Activated CD4-positive, alpha-beta T cell treated with anti-CD3 and anti-CD28 coated beads for 36 hours (primary cell): ENCODE measurements at regions of chr5 and their contacts with region 1.

Region 1: DNA sequence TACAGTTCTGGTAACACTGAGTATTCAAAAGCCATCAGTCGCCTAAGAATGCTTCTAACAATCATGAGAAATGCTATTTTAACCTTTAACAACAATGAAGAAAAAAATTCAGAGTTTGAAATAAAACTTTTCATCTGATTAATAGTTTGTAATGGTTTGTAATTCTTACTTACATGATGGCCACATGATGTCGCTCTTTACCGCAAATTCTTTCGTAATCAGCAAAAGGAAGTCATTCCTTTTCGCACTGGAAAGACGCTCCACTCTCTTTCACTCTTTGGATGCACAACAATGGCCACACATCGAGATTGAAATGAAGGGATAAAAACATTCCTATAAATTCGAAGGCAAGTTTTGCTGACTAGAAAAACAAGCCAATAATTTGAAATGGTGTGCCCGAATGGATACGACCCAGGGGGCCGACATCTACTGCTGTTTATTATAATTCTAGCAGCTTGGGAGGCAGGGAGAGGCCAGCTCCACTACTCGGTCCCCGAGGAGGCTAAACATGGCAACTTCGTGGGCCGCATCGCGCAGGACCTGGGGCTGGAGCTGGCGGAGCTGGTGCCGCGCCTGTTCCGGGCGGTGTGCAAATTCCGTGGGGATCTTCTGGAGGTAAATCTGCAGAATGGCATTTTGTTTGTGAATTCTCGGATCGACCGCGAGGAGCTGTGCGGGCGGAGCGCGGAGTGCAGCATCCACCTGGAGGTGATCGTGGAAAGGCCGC is at the start of gene PCDHA7:
- DNase-seq: no peak
- ATAC-seq: no peak
- H3K4me3 Mint-ChIP-seq: no peak within 1 kb of the TSS
- H3K27ac Mint-ChIP-seq: no peak within 1 kb of the TSS
- H3K4me1 Mint-ChIP-seq: no peaks in the 10 kb centered on the region
- H3K27me3 Mint-ChIP-seq: peaks cover 27% of the 10 kb centered on the region
- total RNA-seq, gene PCDHA7: not detected

Region 2: DNA sequence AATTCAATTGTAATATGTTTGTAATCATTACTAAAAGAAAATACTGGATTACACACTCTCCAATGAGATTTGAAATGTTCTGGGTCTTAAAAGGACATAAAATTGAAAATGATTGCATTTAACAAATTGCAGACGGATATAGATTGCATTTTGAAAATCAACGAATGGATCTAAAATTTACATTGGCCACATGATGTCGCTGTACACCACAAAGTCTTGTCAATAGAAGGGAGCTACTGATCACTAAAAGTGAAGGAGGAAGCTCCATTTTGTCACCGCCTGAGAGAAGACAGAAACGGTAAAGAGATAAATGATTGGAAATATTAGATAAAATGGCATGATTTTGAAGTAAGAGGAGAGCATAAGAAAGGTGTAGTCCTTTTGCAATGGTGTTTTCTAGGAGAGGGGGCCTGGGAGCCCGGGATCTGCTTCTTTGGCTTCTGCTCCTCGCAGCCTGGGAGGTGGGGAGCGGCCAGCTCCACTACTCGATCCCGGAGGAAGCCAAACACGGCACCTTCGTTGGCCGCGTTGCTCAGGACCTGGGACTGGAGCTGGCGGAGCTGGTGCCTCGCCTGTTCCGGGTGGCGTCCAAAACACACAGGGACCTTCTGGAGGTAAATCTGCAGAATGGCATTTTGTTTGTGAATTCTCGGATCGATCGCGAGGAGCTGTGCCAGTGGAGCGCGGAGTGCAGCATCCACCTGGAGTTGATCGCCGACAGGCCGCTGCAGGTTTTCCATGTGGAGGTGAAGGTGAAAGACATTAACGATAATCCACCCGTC is 48.1 kb before region 1 on chr5 and contains the start of gene PCDHA1:
- CTCF ChIA-PET with region 1: no interaction called
- POLR2A ChIA-PET with region 1: no interaction called
- intact Hi-C with region 1: loop called (anchors 5 kb)
- DNase-seq: no peak
- ATAC-seq: no peak
- H3K4me3 Mint-ChIP-seq: no peak within 1 kb of the TSS
- H3K27ac Mint-ChIP-seq: no peak within 1 kb of the TSS
- H3K4me1 Mint-ChIP-seq: no peaks in the 10 kb centered on the region
- H3K27me3 Mint-ChIP-seq: peaks cover 33% of the 10 kb centered on the region
- total RNA-seq, gene PCDHA1: not detected

Region 3: DNA sequence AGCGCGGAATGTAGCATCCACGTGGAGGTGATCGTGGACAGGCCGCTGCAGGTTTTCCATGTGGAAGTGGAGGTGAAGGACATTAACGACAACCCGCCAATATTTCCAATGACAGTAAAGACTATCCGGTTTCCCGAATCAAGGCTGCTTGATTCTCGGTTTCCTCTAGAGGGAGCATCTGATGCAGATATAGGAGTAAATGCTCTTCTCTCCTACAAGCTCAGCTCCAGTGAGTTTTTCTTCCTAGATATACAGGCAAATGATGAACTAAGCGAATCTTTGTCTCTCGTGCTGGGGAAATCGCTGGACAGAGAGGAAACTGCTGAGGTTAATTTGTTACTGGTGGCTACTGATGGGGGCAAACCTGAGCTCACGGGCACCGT is 38.9 kb before region 1 on chr5:
- CTCF ChIA-PET with region 1: no interaction called
- POLR2A ChIA-PET with region 1: no interaction called
- intact Hi-C with region 1: loop called in 1 of 2 experiments (anchors 5 kb)
- DNase-seq: no peak
- ATAC-seq: no peak
- H3K4me3 Mint-ChIP-seq: no peak overlapping the region
- H3K27ac Mint-ChIP-seq: no peak overlapping the region
- H3K4me1 Mint-ChIP-seq: no peaks in the 10 kb centered on the region
- H3K27me3 Mint-ChIP-seq: peaks cover 29% of the 10 kb centered on the region

Region 4: DNA sequence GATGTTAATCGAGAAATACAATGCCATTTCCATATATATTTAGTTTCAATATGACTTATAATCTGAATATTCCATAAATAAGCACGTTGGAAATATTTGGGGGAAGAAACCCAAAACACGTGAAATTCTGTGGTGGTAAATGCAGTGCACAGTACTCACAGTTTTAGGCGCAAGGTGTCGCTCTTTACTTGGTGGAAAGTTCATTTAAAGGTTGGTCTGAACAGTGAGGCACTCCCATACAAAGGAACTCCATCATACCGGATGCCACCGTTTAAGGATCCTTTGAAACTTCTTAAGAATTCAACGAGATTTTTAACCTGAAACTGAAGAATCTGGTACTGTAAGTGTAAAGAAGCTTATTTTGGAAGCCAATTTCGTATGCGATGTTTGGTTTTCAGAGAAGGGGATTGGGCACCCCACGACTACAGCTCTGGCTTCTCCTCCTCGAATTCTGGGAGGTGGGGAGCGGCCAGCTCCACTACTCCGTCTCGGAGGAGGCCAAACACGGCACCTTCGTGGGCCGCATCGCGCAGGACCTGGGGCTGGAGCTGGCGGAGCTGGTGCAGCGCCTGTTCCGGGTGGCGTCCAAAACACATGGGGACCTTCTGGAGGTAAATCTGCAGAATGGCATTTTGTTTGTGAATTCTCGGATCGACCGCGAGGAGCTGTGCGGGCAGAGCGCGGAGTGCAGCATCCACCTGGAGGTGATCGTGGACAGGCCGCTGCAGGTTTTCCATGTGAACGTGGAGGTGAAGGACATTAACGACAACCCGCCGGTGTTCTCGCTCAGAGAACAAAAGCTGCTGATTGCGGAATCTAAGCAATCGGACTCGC is 34.8 kb after region 1 on chr5 and contains the start of gene PCDHA11:
- CTCF ChIA-PET with region 1: no interaction called
- POLR2A ChIA-PET with region 1: no interaction called
- intact Hi-C with region 1: loop called in 1 of 2 experiments (anchors 5 kb)
- DNase-seq: no peak
- ATAC-seq: no peak
- H3K4me3 Mint-ChIP-seq: no peak within 1 kb of the TSS
- H3K27ac Mint-ChIP-seq: no peak within 1 kb of the TSS
- H3K4me1 Mint-ChIP-seq: no peaks in the 10 kb centered on the region
- H3K27me3 Mint-ChIP-seq: peaks cover 18% of the 10 kb centered on the region
- total RNA-seq, gene PCDHA11: not detected

Region 5: DNA sequence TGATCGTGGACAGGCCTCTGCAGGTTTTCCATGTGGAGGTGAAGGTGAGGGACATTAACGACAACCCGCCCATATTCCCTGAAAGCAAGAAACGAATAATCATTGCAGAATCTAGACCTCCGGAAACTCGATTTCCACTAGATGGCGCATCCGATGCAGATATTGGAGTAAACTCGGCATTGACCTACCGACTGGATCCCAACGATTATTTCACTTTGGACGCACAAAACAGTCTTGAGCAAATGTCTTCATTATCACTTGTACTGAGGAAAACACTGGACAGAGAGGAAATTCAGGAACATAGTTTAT is 48.4 kb after region 1 on chr5:
- CTCF ChIA-PET with region 1: interaction called, 4 read pairs
- POLR2A ChIA-PET with region 1: no interaction called
- intact Hi-C with region 1: loop called in 1 of 2 experiments (anchors 10 kb)
- DNase-seq: no peak
- ATAC-seq: no peak
- H3K4me3 Mint-ChIP-seq: no peak overlapping the region
- H3K27ac Mint-ChIP-seq: no peak overlapping the region
- H3K4me1 Mint-ChIP-seq: no peaks in the 10 kb centered on the region
- H3K27me3 Mint-ChIP-seq: peaks cover 34% of the 10 kb centered on the region

Region 6: DNA sequence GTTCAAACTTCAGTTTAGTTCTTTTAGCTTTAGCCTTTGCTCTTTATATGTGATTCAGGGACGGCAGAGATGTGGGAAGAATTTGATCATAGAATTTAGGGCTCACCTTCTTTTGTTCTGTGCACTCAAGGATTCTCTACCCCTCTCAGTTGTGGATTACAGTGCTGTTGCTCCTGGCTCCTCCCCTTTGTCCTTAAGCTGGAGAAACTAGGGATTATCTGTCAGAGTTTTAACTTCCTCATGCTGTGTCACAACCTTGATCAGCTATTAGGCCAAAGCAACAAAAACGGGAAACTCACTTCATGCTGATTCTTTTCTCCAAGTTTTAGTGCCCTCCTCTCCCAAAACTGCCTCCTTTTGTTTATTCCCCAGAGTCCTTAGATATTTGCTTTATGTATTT is 119.1 kb after region 1 on chr5:
- CTCF ChIA-PET with region 1: no interaction called
- POLR2A ChIA-PET with region 1: no interaction called
- intact Hi-C with region 1: no loop called
- DNase-seq: no peak
- ATAC-seq: no peak
- H3K4me3 Mint-ChIP-seq: no peak overlapping the region
- H3K27ac Mint-ChIP-seq: no peak overlapping the region
- H3K4me1 Mint-ChIP-seq: no peaks in the 10 kb centered on the region
- H3K27me3 Mint-ChIP-seq: peaks cover 5% of the 10 kb centered on the region

Region 7: DNA sequence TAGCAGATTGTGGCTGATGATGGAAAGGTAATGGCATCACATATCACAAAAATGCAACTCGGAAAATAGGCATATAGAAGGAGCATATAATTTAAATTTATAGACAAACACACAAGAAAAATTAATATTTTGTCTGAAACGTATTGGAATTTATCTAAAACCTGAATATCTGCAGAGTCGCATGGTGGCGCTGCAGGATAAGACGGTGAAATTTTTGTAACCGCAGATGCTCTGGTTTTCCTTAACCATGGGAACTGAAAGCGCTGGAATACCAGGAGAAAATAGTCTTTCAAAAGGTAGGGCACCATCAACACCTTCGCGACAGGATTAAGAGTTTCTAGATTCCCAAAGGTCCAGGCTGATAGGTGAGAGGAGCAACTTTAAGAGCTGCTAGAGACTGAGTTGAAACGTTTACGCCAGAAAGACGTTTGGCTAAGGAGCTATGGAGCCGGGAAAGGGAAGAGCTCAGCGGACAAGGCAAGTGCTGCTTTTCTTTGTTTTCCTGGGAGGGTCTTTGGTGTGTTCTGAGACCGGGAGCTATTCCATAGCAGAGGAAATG is 400.0 kb after region 1 on chr5:
- CTCF ChIA-PET with region 1: no interaction called
- POLR2A ChIA-PET with region 1: no interaction called
- intact Hi-C with region 1: loop called in 1 of 2 experiments (anchors 10 kb)
- DNase-seq: no peak
- ATAC-seq: no peak
- H3K4me3 Mint-ChIP-seq: no peak overlapping the region
- H3K27ac Mint-ChIP-seq: no peak overlapping the region
- H3K4me1 Mint-ChIP-seq: no peaks in the 10 kb centered on the region
- H3K27me3 Mint-ChIP-seq: peaks cover 35% of the 10 kb centered on the region